ENCODE measurements at regions of chr1 and their contacts with region 1.

Region 1: DNA sequence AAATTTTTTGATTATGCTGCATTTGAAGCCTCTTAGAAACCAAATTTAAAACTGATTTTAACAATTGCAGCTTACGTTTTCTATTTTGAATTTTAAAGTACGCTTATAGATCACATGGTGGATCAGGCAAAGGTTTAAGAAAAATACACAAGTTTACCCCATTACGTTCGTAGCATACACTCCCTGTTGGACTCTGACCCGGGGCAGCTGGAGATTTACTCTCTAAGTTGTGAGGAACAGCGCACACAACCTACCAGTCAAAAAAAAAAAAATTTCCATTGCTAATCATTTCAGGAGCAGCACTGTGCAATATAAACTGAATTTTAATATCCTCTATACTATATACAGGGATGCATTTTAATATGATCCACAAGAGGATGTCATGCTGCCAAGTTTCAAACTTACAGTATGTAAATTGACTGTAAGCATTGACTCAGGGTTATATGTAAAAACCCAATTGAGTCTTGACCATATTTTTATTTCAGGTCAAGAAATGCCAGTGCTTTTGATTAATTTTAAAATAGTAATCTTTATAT is 20.4 kb downstream of the CSDE1 start:
- DNase-seq: no peak
- H3K4me3 ChIP-seq: no peak overlapping the region
- H3K27ac ChIP-seq: no peak overlapping the region
- H3K4me1 ChIP-seq: no peaks in the 10 kb centered on the region
- H3K27me3 ChIP-seq: no peaks in the 10 kb centered on the region
- CTCF ChIP-seq: no peak
- EP300 ChIP-seq: no peak
- POLR2A ChIP-seq: no peak
- RAD21 ChIP-seq: no peak

Region 2: DNA sequence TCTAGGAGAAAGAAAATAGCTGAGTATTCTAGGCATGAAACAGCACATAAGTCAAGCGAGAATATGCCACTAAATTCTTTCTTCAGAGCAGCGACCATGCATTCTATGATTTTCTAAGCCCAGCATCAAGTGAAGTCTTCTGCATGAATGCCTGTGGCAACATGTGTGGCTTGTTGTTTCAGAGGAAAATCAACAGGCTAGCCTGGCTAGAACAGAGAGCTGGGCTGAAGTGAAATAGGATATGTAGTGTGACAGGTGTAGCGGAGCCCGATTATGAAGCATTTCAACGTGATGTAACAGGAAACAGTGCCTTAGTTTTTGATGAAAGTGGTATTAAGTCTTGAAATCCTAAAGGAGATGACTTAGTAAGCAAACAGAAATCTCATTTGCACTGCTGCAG is 13.4 kb after region 1 on chr1:
- CTCF ChIA-PET with region 1: no interaction called
- POLR2A ChIA-PET with region 1: interaction called, 68 read pairs
- DNase-seq: no peak
- H3K4me3 ChIP-seq: no peak overlapping the region
- H3K27ac ChIP-seq: no peak overlapping the region
- H3K4me1 ChIP-seq: peaks cover 0 to 12% (median 1%) of the 10 kb centered on the region in 4 experiments; a peak in 2 of 7 replicates
- H3K27me3 ChIP-seq: no peaks in the 10 kb centered on the region
- CTCF ChIP-seq: no peak
- EP300 ChIP-seq: no peak
- POLR2A ChIP-seq: no peak
- RAD21 ChIP-seq: no peak